ENCODE measurements at regions of chr19 and their contacts with region 1.

Region 1: DNA sequence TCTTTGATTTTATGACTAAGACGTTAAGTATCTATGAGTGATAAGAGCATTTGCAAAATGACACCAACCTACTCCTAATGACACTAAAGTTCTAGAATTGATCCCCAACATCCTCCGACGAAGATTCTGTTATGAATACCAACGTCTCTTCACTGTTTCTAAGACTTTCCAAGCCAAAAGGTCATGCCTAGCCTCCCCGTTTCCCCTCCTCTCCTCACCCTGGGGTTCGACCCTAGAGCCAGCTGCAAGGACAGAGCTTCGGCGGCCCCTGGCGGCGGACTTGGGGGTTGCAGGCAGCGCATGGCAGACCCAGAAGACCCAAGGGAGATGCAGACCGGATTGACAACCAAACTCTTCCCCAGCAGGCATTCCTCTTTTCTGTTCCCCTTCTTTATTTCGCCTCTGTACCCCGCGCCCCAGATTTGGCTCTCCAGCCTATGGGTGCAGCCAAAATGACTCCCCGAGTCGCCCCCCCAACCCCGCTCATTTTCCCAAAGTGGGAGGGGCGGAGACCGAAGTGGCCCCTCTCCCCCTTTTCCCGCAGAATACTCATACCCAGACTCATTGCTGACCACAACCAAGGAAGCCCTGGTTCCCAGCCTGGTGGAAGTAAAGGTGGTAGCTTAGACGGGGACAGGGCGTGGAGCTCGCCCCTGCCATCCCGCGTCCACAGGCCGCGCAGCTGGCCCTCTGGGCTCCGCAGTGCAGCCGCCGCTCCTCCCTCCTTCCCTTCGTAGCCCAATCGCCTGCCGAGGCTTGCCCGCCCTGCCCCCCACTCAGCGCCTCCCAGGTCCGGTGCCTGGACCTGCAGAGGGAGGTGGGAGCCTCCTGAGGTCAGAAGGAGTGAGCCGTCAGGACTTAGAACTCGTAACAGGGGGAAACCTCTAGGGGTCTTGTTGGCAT is 4.1 kb upstream of the EML2 start:
- DNase-seq: peak; percentile 94
- H3K4me3 ChIP-seq: peak overlapping the region; percentile 59 to 65
- H3K27ac ChIP-seq: peak overlapping the region in 1 of 2 experiments; percentile 85; a peak in 2 of 4 replicates
- H3K4me1 ChIP-seq: peaks cover 6 to 17% of the 10 kb centered on the region in 2 experiments; a peak in 1 of 4 replicates
- H3K27me3 ChIP-seq: no peaks in the 10 kb centered on the region
- CTCF ChIP-seq: peak; percentile 99
- EP300 ChIP-seq: no peak
- RAD21 ChIP-seq: peak; percentile 97

Region 2: DNA sequence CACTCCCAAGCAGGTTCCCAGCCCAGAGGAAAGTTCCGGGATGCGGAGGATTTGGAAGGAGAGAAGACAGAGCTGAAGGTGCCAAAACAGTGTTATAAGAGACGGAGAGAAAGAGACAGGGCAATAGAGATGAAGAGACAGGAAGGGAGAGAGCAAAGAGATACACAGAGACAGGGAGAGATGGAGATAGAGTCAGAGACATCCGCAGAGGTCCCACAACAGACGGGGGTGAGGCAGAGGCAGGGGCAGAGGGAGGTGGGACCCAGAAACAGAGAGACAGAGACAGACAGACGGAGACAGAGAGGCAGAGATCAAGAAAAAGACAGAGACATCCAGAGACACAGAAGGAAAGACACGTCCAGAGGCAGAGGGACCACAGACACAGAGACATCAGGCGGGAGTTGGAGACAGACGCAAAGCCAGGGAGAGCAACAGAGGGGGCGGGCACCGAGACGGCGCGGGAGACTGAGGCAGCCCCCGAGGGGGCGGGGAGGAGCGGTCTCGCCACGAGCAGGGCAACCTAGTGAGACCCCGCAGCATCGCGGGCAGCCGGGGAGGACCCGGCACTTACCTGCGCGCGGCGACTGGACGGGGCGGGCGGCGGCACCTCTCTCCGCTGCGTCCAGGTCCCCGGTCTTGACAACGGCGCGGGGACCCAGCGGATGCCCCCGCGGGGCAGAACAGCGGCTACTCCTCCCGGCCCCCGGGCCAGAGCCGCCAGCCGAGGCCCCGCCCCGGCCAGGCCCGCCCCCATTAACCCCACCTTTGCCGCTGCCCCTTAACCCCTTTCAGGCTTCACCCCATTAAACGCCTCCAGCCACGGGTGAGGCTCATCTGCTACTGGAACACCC is 41.5 kb before region 1 on chr19 and contains the start of gene GPR4:
- CTCF ChIA-PET with region 1: interaction called, 53 read pairs
- POLR2A ChIA-PET with region 1: no interaction called
- DNase-seq: peak; percentile 74
- H3K4me3 ChIP-seq: peak within 1 kb of the TSS in 1 of 2 experiments; percentile 17; a peak in 2 of 4 replicates
- H3K27ac ChIP-seq: no peak within 1 kb of the TSS
- H3K4me1 ChIP-seq: peaks cover 0 to 8% of the 10 kb centered on the region in 2 experiments; a peak in 1 of 4 replicates
- H3K27me3 ChIP-seq: peaks cover 21% of the 10 kb centered on the region; the same call in 1 of the 2 replicates
- CTCF ChIP-seq: no peak
- EP300 ChIP-seq: no peak
- RAD21 ChIP-seq: no peak
- polyA plus RNA-seq, gene GPR4: 0.29 and 0.69 TPM in 2 replicates

Region 3: GRCh38 chr19:45615795-45616708 is 27.2 kb before region 1 on chr19:
- CTCF ChIA-PET with region 1: interaction called, 29 read pairs
- POLR2A ChIA-PET with region 1: no interaction called
- DNase-seq: peak; percentile 96
- H3K4me3 ChIP-seq: no peak overlapping the region
- H3K27ac ChIP-seq: peak overlapping the region; percentile 11 to 68; a peak in 3 of 4 replicates
- H3K4me1 ChIP-seq: peaks cover 3 to 16% of the 10 kb centered on the region in 2 experiments; a peak in 3 of 4 replicates
- H3K27me3 ChIP-seq: no peaks in the 10 kb centered on the region
- CTCF ChIP-seq: no peak
- EP300 ChIP-seq: no peak
- RAD21 ChIP-seq: no peak

Region 4: DNA sequence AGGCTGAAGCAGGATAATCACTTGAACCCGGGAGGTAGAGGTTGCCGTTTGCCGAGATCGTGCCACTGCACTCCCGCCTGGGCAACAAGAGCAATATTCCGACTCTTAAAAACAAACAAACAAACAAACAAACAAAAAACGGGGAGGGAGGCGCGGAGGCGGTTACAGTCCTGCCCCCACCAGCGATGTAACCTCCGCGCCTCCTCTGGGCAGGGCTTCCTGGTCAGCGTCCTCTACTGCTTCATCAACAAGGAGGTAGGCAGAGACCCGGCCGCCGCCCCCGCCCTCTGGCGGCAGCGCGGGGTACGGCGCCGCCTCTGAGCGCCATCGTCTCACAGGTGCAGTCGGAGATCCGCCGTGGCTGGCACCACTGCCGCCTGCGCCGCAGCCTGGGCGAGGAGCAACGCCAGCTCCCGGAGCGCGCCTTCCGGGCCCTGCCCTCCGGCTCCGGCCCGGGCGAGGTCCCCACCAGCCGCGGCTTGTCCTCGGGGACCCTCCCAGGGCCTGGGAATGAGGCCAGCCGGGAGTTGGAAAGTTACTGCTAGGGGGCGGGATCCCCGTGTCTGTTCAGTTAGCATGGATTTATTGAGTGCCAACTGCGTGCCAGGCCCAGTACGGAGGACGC is 38.2 kb after region 1 on chr19:
- CTCF ChIA-PET with region 1: interaction called, 49 read pairs
- POLR2A ChIA-PET with region 1: interaction called, 3 read pairs
- DNase-seq: peak; percentile 91
- H3K4me3 ChIP-seq: peak overlapping the region; percentile 40 to 64
- H3K27ac ChIP-seq: peak overlapping the region; percentile 34 to 36; a peak in 3 of 4 replicates
- H3K4me1 ChIP-seq: peaks cover 0 to 14% of the 10 kb centered on the region in 2 experiments; a peak in 1 of 4 replicates
- H3K27me3 ChIP-seq: no peaks in the 10 kb centered on the region
- CTCF ChIP-seq: peak; percentile 88
- EP300 ChIP-seq: no peak
- RAD21 ChIP-seq: peak; percentile 66

Region 5: DNA sequence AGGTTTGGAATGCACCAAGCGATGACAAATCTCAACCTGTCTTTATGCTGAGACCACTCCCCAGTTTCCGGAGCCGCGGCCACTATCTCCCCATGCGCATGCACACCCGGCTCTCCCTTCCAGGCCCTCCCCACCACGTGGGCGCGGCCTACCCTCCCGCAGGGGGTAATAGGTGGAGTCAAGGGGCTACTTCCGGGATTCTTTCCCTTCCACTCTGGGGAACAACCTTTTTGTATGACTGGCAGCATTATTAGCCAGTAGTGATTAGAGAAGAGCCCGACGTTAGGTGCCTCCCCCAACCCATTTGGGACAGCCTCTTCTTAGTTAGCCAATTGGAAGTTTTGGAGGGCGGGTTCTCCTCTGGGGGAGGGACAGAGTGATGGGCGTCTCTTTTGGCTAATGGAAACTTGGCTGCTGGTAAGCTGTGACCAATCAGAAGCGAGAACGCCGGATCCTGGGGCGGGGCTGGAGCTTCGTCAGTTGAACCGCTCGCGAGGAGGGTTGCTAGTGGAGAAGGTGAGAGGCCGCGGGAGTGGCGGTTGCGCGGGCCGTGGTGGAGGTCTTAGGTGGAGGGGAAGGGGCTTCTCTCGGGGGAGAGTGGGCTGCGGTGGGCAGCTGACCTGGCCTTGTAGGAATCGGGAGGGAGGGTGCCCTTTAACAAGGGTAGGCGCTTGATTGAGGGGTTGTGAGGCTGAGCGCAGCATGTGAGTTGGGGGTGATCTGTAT is 351.9 kb after region 1 on chr19 and contains the start of gene CCDC61:
- CTCF ChIA-PET with region 1: no interaction called
- POLR2A ChIA-PET with region 1: no interaction called
- DNase-seq: peak; percentile 95
- H3K4me3 ChIP-seq: peak within 1 kb of the TSS; percentile 73 to 84
- H3K27ac ChIP-seq: peak within 1 kb of the TSS; percentile 35 to 56
- H3K4me1 ChIP-seq: peaks cover 0 to 12% of the 10 kb centered on the region in 2 experiments; a peak in 1 of 4 replicates
- H3K27me3 ChIP-seq: no peaks in the 10 kb centered on the region
- CTCF ChIP-seq: no peak
- EP300 ChIP-seq: no peak
- RAD21 ChIP-seq: no peak
- polyA plus RNA-seq, gene CCDC61: 6.8 and 7.6 TPM in 2 replicates